ENCODE measurements at regions of chr6 and their contacts with region 1.

Region 1: GRCh38 chr6:2542858-2543218 is 207.9 kb downstream of the MYLK4 start:
- DNase-seq: peak; percentile 78
- H3K4me3 Mint-ChIP-seq: peak overlapping the region; percentile 41
- H3K27ac Mint-ChIP-seq: peak overlapping the region; percentile 74
- H3K4me1 Mint-ChIP-seq: peaks cover 39% of the 10 kb centered on the region
- H3K27me3 Mint-ChIP-seq: peaks cover 66% of the 10 kb centered on the region

Region 2: DNA sequence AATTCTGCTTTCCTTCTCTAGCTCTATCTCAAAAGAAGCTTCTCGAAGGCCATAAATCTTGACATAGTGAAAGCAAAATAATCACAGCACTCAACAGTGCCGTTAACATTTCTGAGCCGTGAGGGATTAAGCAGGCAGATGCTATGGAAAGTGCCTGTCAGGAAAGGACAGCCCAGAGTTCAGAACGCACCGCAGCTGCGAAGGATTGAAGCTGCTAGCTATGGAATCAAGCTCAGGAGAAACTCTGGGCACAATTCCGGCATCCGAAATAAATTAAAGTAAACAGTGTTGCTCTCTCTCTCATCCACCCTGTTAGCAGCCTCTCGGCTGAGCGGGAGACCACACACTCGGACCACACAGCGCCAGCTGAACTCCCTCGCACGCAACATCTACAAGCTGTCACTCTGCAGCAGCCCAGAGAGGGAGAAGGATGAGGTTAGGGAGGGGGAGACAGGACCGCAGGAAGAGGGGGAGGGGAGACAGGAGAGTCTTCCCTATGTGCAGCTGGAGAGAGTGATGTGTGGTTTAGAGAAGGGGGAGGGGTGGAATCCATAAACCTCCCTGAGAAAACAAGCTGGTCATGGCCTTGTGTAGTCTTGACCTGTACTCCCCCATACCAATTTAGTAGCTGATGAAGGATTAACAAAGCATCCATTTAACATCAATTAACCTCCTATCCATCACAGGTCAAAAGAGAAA is 1858.9 kb before region 1 on chr6:
- intact Hi-C with region 1: loop called (anchors 5 kb)
- DNase-seq: no peak
- H3K4me3 Mint-ChIP-seq: peak overlapping the region; percentile 41
- H3K27ac Mint-ChIP-seq: peak overlapping the region; percentile 16
- H3K4me1 Mint-ChIP-seq: peaks cover 47% of the 10 kb centered on the region
- H3K27me3 Mint-ChIP-seq: no peaks in the 10 kb centered on the region

Region 3: DNA sequence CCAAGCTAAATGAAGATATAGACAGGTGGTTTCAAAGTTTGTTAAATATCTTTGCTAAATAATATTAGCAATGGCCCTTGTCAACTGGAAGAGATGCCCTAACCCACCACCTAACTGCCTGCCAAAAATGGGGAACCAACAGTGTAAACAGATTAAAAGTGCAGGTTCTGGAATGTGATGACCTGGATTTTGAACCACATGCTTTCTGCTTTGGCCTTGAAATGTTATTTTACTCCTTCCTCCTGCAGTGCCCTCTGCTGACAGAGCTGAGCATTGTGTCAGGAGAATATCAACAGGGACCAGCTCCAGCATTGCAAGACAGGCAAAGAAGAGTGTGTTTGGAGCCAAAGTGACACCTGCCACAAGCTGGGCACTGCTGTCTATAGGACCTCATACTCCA is 18.7 kb before region 1 on chr6:
- intact Hi-C with region 1: no loop called
- DNase-seq: no peak
- H3K4me3 Mint-ChIP-seq: no peak overlapping the region
- H3K27ac Mint-ChIP-seq: no peak overlapping the region
- H3K4me1 Mint-ChIP-seq: peaks cover 13% of the 10 kb centered on the region
- H3K27me3 Mint-ChIP-seq: peaks cover 30% of the 10 kb centered on the region

Region 4: DNA sequence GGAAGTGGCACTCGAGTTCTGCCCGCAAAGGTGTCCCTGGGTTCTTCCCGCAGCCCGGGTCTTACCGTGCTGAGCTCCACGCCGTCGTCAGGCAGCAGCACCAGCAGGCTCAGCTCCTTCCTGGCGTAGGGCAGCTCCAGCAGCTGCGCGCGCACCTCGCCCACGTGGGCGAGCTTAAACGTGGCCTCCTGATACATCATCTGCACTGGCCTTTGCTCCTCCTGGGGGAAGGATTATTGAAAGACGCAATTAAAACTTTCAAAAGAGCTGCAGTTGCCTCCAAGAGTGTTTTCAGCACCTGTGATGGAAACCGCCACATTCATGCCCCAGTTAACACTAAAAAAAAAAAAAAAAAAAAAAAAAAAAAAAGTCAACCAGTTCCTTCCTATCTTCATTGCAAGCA is 348.9 kb after region 1 on chr6:
- intact Hi-C with region 1: no loop called
- DNase-seq: peak; percentile 29
- H3K4me3 Mint-ChIP-seq: peak overlapping the region; percentile 60
- H3K27ac Mint-ChIP-seq: no peak overlapping the region
- H3K4me1 Mint-ChIP-seq: peaks cover 55% of the 10 kb centered on the region
- H3K27me3 Mint-ChIP-seq: no peaks in the 10 kb centered on the region

Measured in activated T-helper 1 cell treated with anti-CD3 and anti-CD28 coated beads, Interleukin-12 subunit alpha, Interleukin-12 subunit beta, Interleukin-2, Interleukin-4 antibody, amounts not matched to agents 30 ng/mL and 10 ng/mL and 1 ng/mL, durations not matched to agents 14 hours and 24 hours and 36 hours (primary cell).